ENCODE measurements at regions of chr17 and their contacts with region 1.

Region 1: DNA sequence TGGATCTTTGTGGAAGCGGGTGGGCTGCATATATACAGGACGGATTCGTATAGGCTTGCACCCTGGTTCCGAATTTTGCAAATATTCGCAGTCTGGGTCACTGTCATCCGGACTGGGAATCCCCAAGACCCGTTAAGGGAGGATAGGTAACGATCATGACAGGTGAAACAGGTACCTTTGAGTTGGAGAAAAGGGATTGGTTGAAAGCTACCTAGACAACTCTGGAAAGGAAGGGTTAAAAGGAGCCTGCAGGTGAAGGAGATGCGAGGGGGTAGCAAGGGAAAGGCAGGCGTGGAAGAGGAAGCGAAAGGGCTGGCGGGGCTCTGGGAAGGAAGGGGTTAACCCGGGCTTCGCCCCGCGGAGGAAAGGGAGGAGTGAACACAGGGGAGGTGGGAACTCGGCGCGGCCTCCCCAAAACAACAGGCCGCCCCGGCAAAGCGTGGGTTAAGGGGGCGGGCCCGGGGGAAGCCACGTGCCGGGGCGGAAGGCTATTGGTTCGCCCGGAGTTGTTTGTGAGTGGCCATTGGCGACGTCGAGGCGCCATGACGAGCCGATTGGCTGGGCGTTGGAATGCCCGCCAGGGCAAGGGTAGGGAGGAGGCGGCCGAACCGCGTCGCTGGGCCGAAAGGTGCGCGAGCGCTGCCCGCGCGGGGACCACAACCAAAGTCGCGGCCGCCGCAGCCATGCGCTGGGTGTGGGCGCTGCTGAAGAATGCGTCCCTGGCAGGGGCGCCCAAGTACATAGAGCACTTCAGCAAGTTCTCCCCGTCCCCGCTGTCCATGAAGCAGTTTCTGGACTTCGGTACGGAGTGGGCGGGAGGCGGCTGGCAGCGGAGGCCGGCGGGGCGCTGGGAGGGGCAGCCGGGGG is at the start of gene PDK2:
- DNase-seq: peak; percentile 96
- ATAC-seq: peak; percentile 92
- H3K4me3 ChIP-seq: peak within 1 kb of the TSS; percentile 84 to 96
- H3K27ac ChIP-seq: peak within 1 kb of the TSS; percentile 64
- H3K4me1 ChIP-seq: peaks cover 14 to 37% of the 10 kb centered on the region in 2 experiments
- H3K27me3 ChIP-seq: no peaks in the 10 kb centered on the region
- CTCF ChIP-seq: no peak
- POLR2A ChIP-seq: no peak
- RAD21 ChIP-seq: no peak
- total RNA-seq, gene PDK2: 39.1 TPM

Region 2: DNA sequence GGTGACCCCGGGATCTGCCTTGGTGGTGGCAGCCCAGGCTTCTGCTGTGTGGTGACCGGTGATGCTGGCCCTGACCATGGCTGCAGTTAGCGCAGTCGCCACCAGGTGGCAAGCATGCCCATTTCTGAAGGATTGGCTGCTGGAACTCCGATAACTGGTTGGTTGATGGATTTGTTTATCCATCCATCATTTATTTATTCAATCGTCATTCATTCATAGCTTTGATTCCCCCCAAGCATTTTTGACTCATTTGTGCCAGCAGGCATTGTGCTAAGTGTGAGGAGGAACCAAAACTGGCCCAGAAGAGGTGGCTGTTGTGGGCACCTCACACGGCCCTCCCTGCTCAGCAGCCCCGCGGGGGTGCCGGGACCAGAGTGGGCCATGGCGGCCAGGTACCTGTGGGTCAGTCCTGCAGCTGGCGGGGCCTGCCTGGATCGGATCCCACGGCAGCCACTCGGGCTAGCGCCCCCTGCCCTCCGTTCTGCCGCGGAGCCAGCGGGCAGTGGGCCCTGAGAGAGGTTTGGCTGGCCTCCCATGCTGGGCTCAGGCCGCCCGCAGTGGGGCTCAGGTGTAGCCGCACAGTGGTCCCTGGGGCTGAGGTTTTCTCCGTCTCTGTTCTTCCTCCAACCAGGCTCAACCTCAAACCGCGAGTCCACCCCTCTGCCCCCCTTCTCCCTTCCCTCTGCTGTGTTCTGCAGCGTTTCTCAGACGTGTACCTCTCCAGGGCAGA is 67.9 kb before region 1 on chr17:
- CTCF ChIA-PET with region 1: interaction called, 14 read pairs
- POLR2A ChIA-PET with region 1: interaction called, 5 read pairs
- RAD21 ChIA-PET with region 1: interaction called in 1 of 2 experiments, 3 read pairs
- intact Hi-C with region 1: no loop called
- DNase-seq: peak; percentile 77
- ATAC-seq: peak; percentile 62
- H3K4me3 ChIP-seq: peak overlapping the region; percentile 52 to 55
- H3K27ac ChIP-seq: peak overlapping the region; percentile 93
- H3K4me1 ChIP-seq: peaks cover 28 to 44% of the 10 kb centered on the region in 2 experiments
- H3K27me3 ChIP-seq: no peaks in the 10 kb centered on the region
- CTCF ChIP-seq: peak; percentile 94 to 99 (median 98)
- POLR2A ChIP-seq: no peak
- RAD21 ChIP-seq: peak; percentile 97

Region 3: GRCh38 chr17:50064258-50065001 is 30.6 kb before region 1 on chr17:
- CTCF ChIA-PET with region 1: interaction called, 14 read pairs
- POLR2A ChIA-PET with region 1: interaction called, 7 read pairs
- RAD21 ChIA-PET with region 1: no interaction called
- intact Hi-C with region 1: no loop called
- DNase-seq: peak; percentile 86
- ATAC-seq: peak; percentile 65
- H3K4me3 ChIP-seq: peak overlapping the region; percentile 10 to 50; a peak in 3 of 4 replicates
- H3K27ac ChIP-seq: peak overlapping the region; percentile 93
- H3K4me1 ChIP-seq: peaks cover 75 to 80% of the 10 kb centered on the region in 2 experiments
- H3K27me3 ChIP-seq: no peaks in the 10 kb centered on the region
- CTCF ChIP-seq: no peak
- POLR2A ChIP-seq: no peak
- RAD21 ChIP-seq: no peak

Region 4: DNA sequence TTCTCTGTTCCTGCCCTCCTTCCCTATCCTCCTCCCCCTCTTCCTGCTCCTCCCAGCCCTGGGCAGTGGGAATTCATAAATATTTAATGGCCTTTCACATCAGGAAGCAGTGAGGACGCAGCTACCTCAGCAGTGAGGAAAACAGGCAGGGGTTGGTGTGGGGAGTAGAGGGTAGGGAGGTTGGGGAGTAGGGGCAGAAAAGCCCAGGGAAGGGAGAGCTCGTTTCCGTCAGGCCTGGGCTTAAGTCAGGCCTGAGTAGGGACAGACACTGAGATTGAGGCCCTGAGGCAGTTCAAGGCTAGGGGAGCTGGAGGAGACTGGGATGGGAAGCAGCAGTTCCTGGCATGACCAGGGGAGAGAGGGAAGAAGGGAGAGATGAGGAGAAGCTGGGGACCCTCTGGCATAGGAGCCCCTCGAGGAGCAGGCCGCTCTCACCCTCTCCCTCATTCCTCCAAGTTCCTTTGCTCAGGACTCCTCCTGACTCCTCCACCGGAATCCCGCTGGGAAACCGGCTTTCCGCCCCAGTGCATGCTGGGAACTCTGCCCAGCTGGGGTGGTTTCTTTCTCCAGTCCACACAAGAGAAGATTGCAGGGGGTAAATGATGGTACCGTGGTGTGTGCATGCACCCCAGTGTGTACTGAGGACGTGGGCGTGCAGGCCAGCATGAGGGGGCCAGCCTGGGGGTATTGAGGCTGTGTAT is 28.8 kb after region 1 on chr17:
- CTCF ChIA-PET with region 1: interaction called, 55 read pairs
- POLR2A ChIA-PET with region 1: no interaction called
- RAD21 ChIA-PET with region 1: no interaction called
- intact Hi-C with region 1: no loop called
- DNase-seq: no peak
- ATAC-seq: peak; percentile 72
- H3K4me3 ChIP-seq: peak overlapping the region; percentile 37 to 49
- H3K27ac ChIP-seq: peak overlapping the region; percentile 34
- H3K4me1 ChIP-seq: peaks cover 9 to 22% of the 10 kb centered on the region in 2 experiments; a peak in 3 of 4 replicates
- H3K27me3 ChIP-seq: peaks cover 6% of the 10 kb centered on the region; the same call in 1 of the 2 replicates
- CTCF ChIP-seq: no peak
- POLR2A ChIP-seq: peak; percentile 63
- RAD21 ChIP-seq: no peak

Region 5: GRCh38 chr17:50169121-50169764 is 74.3 kb after region 1 on chr17:
- CTCF ChIA-PET with region 1: interaction called, 10 read pairs
- POLR2A ChIA-PET with region 1: no interaction called
- RAD21 ChIA-PET with region 1: interaction called in 1 of 2 experiments, 4 read pairs
- intact Hi-C with region 1: no loop called
- DNase-seq: peak; percentile 78
- ATAC-seq: peak; percentile 77
- H3K4me3 ChIP-seq: peak overlapping the region; percentile 19 to 27; a peak in 3 of 4 replicates
- H3K27ac ChIP-seq: no peak overlapping the region
- H3K4me1 ChIP-seq: peaks cover 9 to 46% of the 10 kb centered on the region in 2 experiments
- H3K27me3 ChIP-seq: no peaks in the 10 kb centered on the region
- CTCF ChIP-seq: peak; percentile 97 to 100 (median 98)
- POLR2A ChIP-seq: no peak
- RAD21 ChIP-seq: peak; percentile 99

Region 6: DNA sequence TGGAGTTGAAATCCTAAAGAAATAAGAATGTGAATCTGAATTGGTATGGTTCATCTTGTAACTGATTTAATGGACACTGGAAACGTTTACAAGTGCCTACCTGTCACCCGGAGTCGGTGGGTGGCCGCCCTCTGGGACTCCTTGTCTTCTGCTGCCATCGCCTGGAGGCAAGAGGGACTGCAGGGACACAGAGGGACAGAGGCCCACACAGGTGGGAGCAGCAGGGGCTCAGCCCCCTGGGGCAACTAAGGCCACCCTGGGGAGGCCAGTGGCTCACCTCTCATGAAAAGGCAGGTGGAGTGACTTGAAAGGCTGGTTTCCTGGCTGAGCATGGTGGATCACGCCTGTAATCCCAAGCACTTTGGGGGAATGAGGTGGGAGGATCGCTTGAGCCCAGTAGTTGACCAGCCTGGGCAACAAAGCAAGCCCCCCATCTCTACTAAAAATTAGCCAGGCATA is 202.4 kb after region 1 on chr17:
- CTCF ChIA-PET with region 1: interaction called, 34 read pairs
- POLR2A ChIA-PET with region 1: no interaction called
- RAD21 ChIA-PET with region 1: no interaction called
- intact Hi-C with region 1: loop called (anchors 1 kb)
- DNase-seq: peak; percentile 80
- ATAC-seq: peak; percentile 99
- H3K4me3 ChIP-seq: no peak overlapping the region
- H3K27ac ChIP-seq: no peak overlapping the region
- H3K4me1 ChIP-seq: no peaks in the 10 kb centered on the region
- H3K27me3 ChIP-seq: no peaks in the 10 kb centered on the region
- CTCF ChIP-seq: peak; percentile 74 to 99 (median 98)
- POLR2A ChIP-seq: no peak
- RAD21 ChIP-seq: peak; percentile 100

Measured in HCT116 (cell line).